Endothelial cell of umbilical vein (primary cell): ENCODE measurements at regions of chr16 and their contacts with region 1.

Region 1: GRCh38 chr16:106623-107324 is 28.7 kb downstream of the MPG start:
- DNase-seq: peak; percentile 71
- H3K4me3 ChIP-seq: no peak overlapping the region
- H3K27ac ChIP-seq: no peak overlapping the region
- H3K4me1 ChIP-seq: peaks cover 5% of the 10 kb centered on the region
- H3K27me3 ChIP-seq: no peaks in the 10 kb centered on the region
- CTCF ChIP-seq: peak; percentile 74 to 83
- POLR2A ChIP-seq: no peak

Region 2: DNA sequence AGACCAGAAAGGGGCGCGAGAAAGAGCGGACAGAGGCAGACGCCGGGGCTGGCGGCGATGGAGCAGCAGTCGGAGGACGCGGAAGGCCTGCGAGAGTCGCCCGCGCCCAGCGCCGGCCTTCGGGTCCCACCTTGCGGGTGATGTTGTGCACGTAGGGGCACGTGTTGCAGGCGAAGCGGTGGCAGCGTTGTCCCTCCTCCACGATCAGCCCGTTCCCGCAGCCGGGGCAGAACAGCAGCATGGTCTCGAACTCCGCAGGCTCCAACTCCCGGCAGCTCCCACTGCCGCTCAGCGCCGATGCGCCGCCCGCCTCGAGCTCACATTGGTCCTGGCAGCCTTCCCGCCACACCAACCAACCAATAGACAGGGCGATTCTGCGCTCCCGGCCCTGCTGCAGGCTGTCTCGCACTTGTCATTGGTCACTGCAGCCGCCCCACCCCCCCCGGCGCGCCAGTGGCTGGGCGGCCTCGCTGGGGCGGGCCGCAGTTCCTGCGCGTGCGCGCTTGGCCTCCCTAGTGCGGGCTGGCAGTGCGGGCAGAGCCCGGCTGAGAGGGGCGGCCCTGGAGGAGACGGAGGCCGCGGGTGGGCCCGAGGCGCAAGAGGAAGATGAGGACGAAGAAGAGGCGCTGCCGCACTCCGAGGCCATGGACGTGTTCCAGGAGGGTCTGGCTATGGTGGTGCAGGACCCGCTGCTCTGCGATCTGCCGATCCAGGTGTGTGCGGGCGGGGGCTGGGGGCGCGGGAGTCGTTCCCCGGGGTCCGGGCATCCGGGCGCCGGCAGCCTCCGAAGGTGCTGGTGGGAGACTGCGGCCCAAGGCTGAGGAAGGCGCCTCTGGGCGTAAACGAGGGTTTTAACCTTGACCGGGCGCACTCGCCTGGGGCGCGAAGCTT is 53.2 kb before region 1 on chr16 and contains the starts of genes POLR3K and SNRNP25:
- CTCF ChIA-PET with region 1: interaction called, 14 read pairs
- POLR2A ChIA-PET with region 1: no interaction called
- dilution Hi-C with region 1: no loop called
- intact Hi-C with region 1: no loop called
- DNase-seq: peak; percentile 98
- H3K4me3 ChIP-seq: peak within 1 kb of the TSS; percentile 20 to 59 (median 49)
- H3K27ac ChIP-seq: no peak within 1 kb of the TSS
- H3K4me1 ChIP-seq: peaks cover 5% of the 10 kb centered on the region
- H3K27me3 ChIP-seq: no peaks in the 10 kb centered on the region
- CTCF ChIP-seq: no peak
- POLR2A ChIP-seq: peak; percentile 86
- total RNA-seq, gene POLR3K: 18.4 and 20.6 TPM in 2 replicates
- total RNA-seq, gene SNRNP25: 41.8 and 50.2 TPM in 2 replicates

Region 3: GRCh38 chr16:84718-85406 is 21.9 kb before region 1 on chr16:
- CTCF ChIA-PET with region 1: interaction called, 13 read pairs
- POLR2A ChIA-PET with region 1: no interaction called
- dilution Hi-C with region 1: no loop called
- intact Hi-C with region 1: no loop called
- DNase-seq: peak; percentile 97
- H3K4me3 ChIP-seq: no peak overlapping the region
- H3K27ac ChIP-seq: peak overlapping the region; percentile 78
- H3K4me1 ChIP-seq: peaks cover 33% of the 10 kb centered on the region
- H3K27me3 ChIP-seq: no peaks in the 10 kb centered on the region
- CTCF ChIP-seq: no peak
- POLR2A ChIP-seq: peak; percentile 66

Region 4: GRCh38 chr16:138049-138417 is 31.3 kb after region 1 on chr16:
- CTCF ChIA-PET with region 1: interaction called, 16 read pairs
- POLR2A ChIA-PET with region 1: no interaction called
- dilution Hi-C with region 1: no loop called
- intact Hi-C with region 1: no loop called
- DNase-seq: peak; percentile 18
- H3K4me3 ChIP-seq: peak overlapping the region; percentile 47 to 79 (median 65)
- H3K27ac ChIP-seq: peak overlapping the region; percentile 2
- H3K4me1 ChIP-seq: peaks cover 3% of the 10 kb centered on the region
- H3K27me3 ChIP-seq: no peaks in the 10 kb centered on the region
- CTCF ChIP-seq: no peak
- POLR2A ChIP-seq: no peak

Region 5: DNA sequence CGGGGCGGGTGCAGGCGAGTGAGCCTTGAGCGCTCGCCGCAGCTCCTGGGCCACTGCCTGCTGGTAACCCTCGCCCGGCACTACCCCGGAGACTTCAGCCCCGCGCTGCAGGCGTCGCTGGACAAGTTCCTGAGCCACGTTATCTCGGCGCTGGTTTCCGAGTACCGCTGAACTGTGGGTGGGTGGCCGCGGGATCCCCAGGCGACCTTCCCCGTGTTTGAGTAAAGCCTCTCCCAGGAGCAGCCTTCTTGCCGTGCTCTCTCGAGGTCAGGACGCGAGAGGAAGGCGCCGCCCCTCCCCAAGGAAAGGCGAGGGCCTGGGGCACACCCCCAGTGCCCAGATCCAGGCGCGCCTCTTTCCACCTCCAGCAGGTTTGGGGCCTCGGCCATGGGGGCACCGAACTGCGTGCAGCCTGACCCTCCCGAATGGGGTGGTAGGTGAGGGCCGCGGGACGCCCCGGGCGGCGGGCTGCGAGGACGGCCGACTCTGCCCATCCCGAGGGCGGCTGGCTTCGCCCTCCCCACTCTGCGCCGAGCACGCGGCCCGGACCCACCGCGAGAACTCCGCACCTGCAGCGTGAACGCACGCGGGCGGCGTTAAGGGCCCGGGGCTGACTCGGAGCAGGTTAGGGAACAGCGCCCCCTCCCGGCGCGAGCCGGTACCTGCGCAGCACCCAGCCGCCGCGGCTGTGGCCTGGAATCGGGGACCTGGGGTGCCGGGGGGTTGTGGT is 74.3 kb after region 1 on chr16:
- CTCF ChIA-PET with region 1: interaction called, 61 read pairs
- POLR2A ChIA-PET with region 1: interaction called, 3 read pairs
- dilution Hi-C with region 1: no loop called
- intact Hi-C with region 1: loop called (anchors 1 kb)
- DNase-seq: peak; percentile 71
- H3K4me3 ChIP-seq: no peak overlapping the region
- H3K27ac ChIP-seq: no peak overlapping the region
- H3K4me1 ChIP-seq: peaks cover 5% of the 10 kb centered on the region
- H3K27me3 ChIP-seq: peaks cover 19 to 25% of the 10 kb centered on the region in 2 experiments
- CTCF ChIP-seq: peak; percentile 95 to 98
- POLR2A ChIP-seq: peak; percentile 48

Region 6: GRCh38 chr16:203246-203645 is 96.5 kb after region 1 on chr16:
- CTCF ChIA-PET with region 1: no interaction called
- POLR2A ChIA-PET with region 1: no interaction called
- dilution Hi-C with region 1: no loop called
- intact Hi-C with region 1: no loop called
- DNase-seq: no peak
- H3K4me3 ChIP-seq: no peak overlapping the region
- H3K27ac ChIP-seq: no peak overlapping the region
- H3K4me1 ChIP-seq: no peaks in the 10 kb centered on the region
- H3K27me3 ChIP-seq: no peaks in the 10 kb centered on the region
- CTCF ChIP-seq: no peak
- POLR2A ChIP-seq: no peak

Region 7: GRCh38 chr16:361872-362701 is 255.3 kb after region 1 on chr16:
- CTCF ChIA-PET with region 1: interaction called, 130 read pairs
- POLR2A ChIA-PET with region 1: no interaction called
- dilution Hi-C with region 1: no loop called
- intact Hi-C with region 1: loop called (anchors 1 kb)
- DNase-seq: peak; percentile 70
- H3K4me3 ChIP-seq: no peak overlapping the region
- H3K27ac ChIP-seq: no peak overlapping the region
- H3K4me1 ChIP-seq: no peaks in the 10 kb centered on the region
- H3K27me3 ChIP-seq: no peaks in the 10 kb centered on the region
- CTCF ChIP-seq: peak; percentile 65 to 83
- POLR2A ChIP-seq: no peak

Region 8: GRCh38 chr16:456891-457483 is 350.2 kb after region 1 on chr16:
- CTCF ChIA-PET with region 1: no interaction called
- POLR2A ChIA-PET with region 1: no interaction called
- dilution Hi-C with region 1: no loop called
- intact Hi-C with region 1: no loop called
- DNase-seq: peak; percentile 56
- H3K4me3 ChIP-seq: no peak overlapping the region
- H3K27ac ChIP-seq: peak overlapping the region; percentile 97
- H3K4me1 ChIP-seq: peaks cover 20% of the 10 kb centered on the region
- H3K27me3 ChIP-seq: no peaks in the 10 kb centered on the region
- CTCF ChIP-seq: no peak
- POLR2A ChIP-seq: no peak